ENCODE measurements at regions of chr12 and their contacts with region 1.

Region 1: DNA sequence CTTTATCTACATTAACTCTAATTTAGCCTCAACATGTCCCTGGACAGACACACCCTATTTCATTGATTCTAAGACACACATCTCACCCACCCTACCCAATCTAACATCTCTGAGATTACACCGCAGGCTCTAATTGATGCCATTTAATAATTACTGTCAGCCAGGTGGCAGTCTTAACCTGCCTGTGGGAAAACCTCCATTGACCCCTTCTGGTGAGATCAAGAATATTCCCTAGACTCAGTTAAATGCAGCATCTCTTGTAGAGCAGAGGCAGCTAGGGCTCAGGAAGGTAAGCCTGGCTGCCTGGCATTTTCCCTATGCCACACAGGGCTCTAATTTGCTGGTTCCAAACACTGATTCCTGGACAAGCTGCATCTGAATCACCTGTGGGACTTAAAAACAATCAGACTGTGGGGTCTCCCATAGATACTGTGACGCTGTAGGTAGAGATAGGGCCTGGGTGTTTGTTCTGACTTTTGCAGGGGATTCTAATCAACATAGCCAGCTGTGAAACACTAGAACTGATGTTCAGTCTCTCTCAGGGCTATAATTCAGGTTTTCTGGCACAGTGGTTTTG is 14.3 kb downstream of the MCRS1 start:
- DNase-seq: peak; percentile 68 to 71
- ATAC-seq: peak; percentile 58 to 75
- H3K4me3 ChIP-seq: no peak overlapping the region
- H3K27ac ChIP-seq: no peak overlapping the region
- H3K4me1 ChIP-seq: no peaks in the 10 kb centered on the region
- CTCF ChIP-seq: peak; percentile 72
- EP300 ChIP-seq: no peak
- POLR2A ChIP-seq: no peak
- RAD21 ChIP-seq: peak; percentile 72 to 87

Region 2: DNA sequence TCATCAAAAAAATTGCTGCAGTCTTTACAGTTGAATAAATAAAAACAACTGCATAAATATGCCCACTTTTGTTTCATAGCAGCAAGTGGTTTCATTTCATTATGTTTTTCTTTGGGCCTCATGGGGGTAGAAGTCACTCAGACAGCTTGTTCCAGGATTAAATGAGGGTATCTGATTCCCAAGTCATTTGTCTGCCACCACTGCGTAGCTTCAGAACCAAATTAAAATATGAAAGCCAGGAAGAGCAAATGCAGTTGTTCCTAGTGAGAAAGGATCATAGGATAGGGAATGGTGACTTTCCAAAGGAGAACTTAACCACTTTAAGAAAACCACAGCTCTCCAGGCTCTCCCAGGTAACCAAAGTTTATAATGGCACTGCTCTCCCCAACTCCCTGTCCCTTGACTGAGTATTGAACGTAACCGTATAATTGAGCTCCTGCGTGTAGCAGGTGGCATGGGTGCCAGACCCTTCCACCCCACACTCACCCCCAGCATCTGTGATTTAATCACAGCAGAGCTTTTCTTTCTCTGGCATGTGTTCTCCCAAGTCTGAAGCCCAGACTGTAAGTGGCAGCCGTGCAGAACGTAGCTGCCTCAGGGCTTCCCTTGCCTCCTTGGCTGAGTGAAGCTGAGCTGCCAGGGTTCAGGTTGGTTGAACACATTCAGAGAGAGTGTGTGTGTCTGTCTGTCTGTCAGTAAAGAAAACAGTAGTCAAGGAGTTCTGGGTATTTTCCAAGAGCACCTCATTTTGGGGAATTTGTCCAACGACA is 26.1 kb before region 1 on chr12:
- CTCF ChIA-PET with region 1: interaction called, 33 read pairs
- POLR2A ChIA-PET with region 1: no interaction called
- DNase-seq: no peak
- ATAC-seq: no peak
- H3K4me3 ChIP-seq: no peak overlapping the region
- H3K27ac ChIP-seq: no peak overlapping the region
- H3K4me1 ChIP-seq: no peaks in the 10 kb centered on the region
- CTCF ChIP-seq: no peak
- EP300 ChIP-seq: no peak
- POLR2A ChIP-seq: peak; percentile 21; the same call in 1 of the 2 replicates
- RAD21 ChIP-seq: no peak

Region 3: DNA sequence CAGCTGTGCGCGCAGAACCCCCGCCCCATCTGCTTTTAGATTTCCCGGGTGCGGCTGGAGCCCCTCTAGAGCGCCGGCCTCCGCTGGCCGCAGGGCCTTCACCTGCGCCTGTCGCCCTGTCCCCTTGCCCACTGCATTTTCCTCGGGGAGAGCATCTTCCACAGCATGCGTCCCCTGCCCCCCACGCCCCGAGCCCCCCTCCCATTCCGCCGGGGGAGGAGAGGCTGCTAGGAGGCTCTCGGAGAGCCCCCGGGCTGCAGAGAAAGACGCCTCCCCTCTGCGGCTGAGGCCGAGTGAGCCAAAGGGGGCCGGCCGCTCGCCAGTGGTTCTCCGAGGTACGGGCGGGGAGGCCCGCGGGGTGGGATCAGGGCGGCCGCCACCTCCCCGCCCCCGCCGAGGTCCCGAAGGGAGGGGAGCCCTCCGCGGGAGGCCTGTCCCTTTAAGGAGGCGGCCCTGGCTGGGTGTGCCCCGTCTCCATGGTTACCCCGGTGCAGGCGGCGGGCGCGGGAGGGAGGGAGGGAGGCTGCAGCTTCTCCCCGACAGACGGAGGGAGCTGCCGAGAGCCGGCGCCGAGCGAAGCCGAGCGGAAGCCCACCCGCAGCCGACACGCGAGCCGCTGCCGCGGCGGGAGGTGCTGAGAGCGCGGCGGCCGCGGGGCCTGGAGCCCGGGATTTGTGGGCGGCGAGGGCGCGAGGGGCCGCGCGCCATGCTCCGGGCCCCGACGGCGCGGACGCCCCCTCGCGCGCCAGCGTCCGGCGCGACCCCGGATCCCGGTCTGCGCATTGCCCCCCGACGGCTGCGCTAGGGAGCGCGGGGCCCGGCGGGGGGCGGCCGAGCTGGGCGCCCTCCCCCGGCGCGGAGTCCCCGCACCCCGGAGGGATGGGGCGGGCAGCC is 14.8 kb before region 1 on chr12 and contains the start of gene KCNH3:
- CTCF ChIA-PET with region 1: interaction called, 56 read pairs
- POLR2A ChIA-PET with region 1: no interaction called
- DNase-seq: peak; percentile 71 to 88
- ATAC-seq: peak; percentile 72 to 77
- H3K4me3 ChIP-seq: peak within 1 kb of the TSS; percentile 76
- H3K27ac ChIP-seq: peak within 1 kb of the TSS; percentile 65 to 91
- H3K4me1 ChIP-seq: peaks cover 32% of the 10 kb centered on the region
- CTCF ChIP-seq: no peak
- EP300 ChIP-seq: no peak
- POLR2A ChIP-seq: no peak
- RAD21 ChIP-seq: no peak
- polyA plus RNA-seq, gene KCNH3: 1.0 and 1.2 TPM in 2 replicates

Region 4: DNA sequence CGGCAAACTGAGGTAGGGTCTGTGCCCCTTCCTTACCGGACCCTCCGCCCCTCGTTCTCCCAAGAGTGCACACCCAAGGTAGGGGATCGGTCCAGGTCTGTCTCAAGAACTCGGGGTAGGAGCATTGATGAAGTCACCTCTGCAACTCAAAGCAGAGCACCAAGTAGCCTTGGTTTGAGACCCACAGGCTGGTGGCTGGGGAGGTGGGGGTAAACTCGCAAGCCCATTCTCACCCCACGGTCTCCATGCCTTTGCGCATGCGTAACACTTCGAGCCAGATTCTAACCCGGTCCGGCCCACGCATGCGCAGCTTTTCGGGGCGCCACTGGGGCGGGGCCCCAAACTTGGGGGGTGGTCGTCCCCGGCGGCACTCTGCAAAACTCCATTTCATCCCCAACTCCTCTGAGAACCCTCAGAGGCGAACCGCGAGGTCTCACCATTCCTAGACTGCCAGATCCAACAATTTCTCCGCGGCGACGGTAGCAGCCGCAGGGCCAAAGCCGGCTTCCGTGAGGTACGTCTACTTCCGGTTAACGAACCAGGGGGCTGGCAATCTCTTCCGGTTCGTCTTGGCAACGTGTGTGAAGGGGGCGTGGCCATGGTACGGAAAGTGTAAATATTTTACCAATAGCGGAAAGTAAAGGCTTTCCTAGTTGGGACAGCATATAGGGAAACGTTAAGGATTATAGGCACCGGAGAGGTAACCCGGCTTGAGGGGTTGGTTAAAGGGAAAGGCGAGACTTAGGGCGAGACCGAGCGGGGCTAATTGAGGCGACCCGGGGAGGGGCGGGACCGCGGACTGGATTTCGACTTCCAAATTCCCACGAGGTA is 14.2 kb after region 1 on chr12 and contains the start of gene MCRS1:
- CTCF ChIA-PET with region 1: interaction called, 25 read pairs
- POLR2A ChIA-PET with region 1: interaction called, 6 read pairs
- DNase-seq: peak; percentile 94 to 99
- ATAC-seq: peak; percentile 89 to 90
- H3K4me3 ChIP-seq: peak within 1 kb of the TSS; percentile 65
- H3K27ac ChIP-seq: peak within 1 kb of the TSS; percentile 95 to 99
- H3K4me1 ChIP-seq: peaks cover 13% of the 10 kb centered on the region
- CTCF ChIP-seq: no peak
- EP300 ChIP-seq: no peak
- POLR2A ChIP-seq: peak; percentile 63
- RAD21 ChIP-seq: no peak
- polyA plus RNA-seq, gene MCRS1: 68.5 and 69.4 TPM in 2 replicates

Region 5: GRCh38 chr12:49580572-49581535 is 27.3 kb after region 1 on chr12:
- CTCF ChIA-PET with region 1: interaction called, 91 read pairs
- POLR2A ChIA-PET with region 1: no interaction called
- DNase-seq: peak; percentile 83 to 86
- ATAC-seq: peak; percentile 95 to 98
- H3K4me3 ChIP-seq: no peak overlapping the region
- H3K27ac ChIP-seq: 0 out of 6 replicates have a peak overlapping the region, but pooled peaks of 1 of the 2 experiments have one; percentile 22
- H3K4me1 ChIP-seq: peaks cover 16% of the 10 kb centered on the region; the same call in 2 of the 3 replicates
- CTCF ChIP-seq: peak; percentile 81
- EP300 ChIP-seq: no peak
- POLR2A ChIP-seq: no peak
- RAD21 ChIP-seq: peak; percentile 83 to 90

Region 6: DNA sequence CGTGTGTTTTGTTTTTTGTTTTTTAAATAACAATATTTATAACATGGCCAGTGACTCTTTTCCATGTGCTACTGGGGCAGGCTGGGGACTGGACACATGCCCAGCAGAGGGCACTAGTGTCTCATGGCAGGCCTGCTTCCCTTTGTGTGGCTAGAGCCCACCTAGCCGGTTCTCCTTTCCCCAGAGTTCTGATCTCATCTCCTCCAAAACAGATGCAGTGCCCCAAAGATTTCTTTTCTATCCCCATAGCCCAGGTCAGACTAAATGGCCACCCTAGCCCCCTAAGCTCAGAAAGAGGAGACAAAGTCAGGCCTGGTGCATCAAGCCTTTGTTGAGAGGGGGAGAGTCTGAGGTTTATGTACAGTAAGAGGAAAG is 91.0 kb after region 1 on chr12:
- CTCF ChIA-PET with region 1: no interaction called
- POLR2A ChIA-PET with region 1: no interaction called
- DNase-seq: peak; percentile 68 to 86
- ATAC-seq: peak; percentile 68 to 92; a peak in 5 of 6 replicates
- H3K4me3 ChIP-seq: no peak overlapping the region
- H3K27ac ChIP-seq: no peak overlapping the region
- H3K4me1 ChIP-seq: no peaks in the 10 kb centered on the region
- CTCF ChIP-seq: peak; percentile 90
- EP300 ChIP-seq: no peak
- POLR2A ChIP-seq: no peak
- RAD21 ChIP-seq: peak; percentile 87 to 96

Region 7: GRCh38 chr12:49687941-49688340 is 134.3 kb after region 1 on chr12:
- CTCF ChIA-PET with region 1: no interaction called
- POLR2A ChIA-PET with region 1: no interaction called
- DNase-seq: no peak
- ATAC-seq: peak; percentile 83 to 84
- H3K4me3 ChIP-seq: no peak overlapping the region
- H3K27ac ChIP-seq: no peak overlapping the region
- H3K4me1 ChIP-seq: no peaks in the 10 kb centered on the region
- CTCF ChIP-seq: no peak
- EP300 ChIP-seq: no peak
- POLR2A ChIP-seq: no peak
- RAD21 ChIP-seq: no peak

Measured in A549 (cell line).